Activated naive CD4-positive, alpha-beta T cell treated with anti-CD3 and anti-CD28 coated beads for 36 hours (primary cell): ENCODE measurements at regions of chr11 and their contacts with region 1.

Region 1: GRCh38 chr11:35177370-35177769 is 38.4 kb downstream of the CD44 start:
- DNase-seq: peak; percentile 56
- H3K4me3 Mint-ChIP-seq: no peak overlapping the region
- H3K27ac Mint-ChIP-seq: peak overlapping the region; percentile 77
- H3K4me1 Mint-ChIP-seq: peaks cover 90% of the 10 kb centered on the region
- H3K27me3 Mint-ChIP-seq: no peaks in the 10 kb centered on the region

Region 2: GRCh38 chr11:34624069-34624468 is 553.3 kb before region 1 on chr11:
- CTCF ChIA-PET with region 1: no interaction called
- intact Hi-C with region 1: no loop called
- DNase-seq: no peak
- H3K4me3 Mint-ChIP-seq: no peak overlapping the region
- H3K27ac Mint-ChIP-seq: no peak overlapping the region
- H3K4me1 Mint-ChIP-seq: no peaks in the 10 kb centered on the region
- H3K27me3 Mint-ChIP-seq: peaks cover 13% of the 10 kb centered on the region

Region 3: DNA sequence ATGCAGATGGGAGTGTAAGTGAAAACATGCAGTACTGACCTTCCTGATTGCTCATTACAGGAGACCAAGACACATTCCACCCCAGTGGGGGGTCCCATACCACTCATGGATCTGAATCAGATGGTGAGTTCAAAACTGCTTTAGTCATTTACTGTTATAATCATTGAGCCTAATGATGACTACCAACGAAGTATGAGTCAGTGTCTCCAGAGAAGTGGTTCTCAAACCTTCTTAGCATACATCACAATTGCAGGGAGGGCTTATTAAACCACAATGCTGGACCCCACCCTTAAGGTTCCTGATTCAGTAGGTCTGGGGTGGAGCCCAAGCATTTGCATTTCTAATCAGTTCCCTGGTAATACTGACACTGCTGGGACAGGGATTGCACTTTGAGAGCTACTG is 37.4 kb after region 1 on chr11:
- CTCF ChIA-PET with region 1: interaction called, 5 read pairs
- intact Hi-C with region 1: loop called (anchors 1 kb)
- DNase-seq: peak; percentile 77
- H3K4me3 Mint-ChIP-seq: no peak overlapping the region
- H3K27ac Mint-ChIP-seq: peak overlapping the region; percentile 78
- H3K4me1 Mint-ChIP-seq: peaks cover 62% of the 10 kb centered on the region
- H3K27me3 Mint-ChIP-seq: no peaks in the 10 kb centered on the region